Endothelial cell of umbilical vein (primary cell): ENCODE measurements at regions of chr11 and their contacts with region 1.

Region 1: GRCh38 chr11:75468534-75469340 is 35.7 kb upstream of the KLHL35 start:
- DNase-seq: peak; percentile 97
- H3K4me3 ChIP-seq: no peak overlapping the region
- H3K27ac ChIP-seq: peak overlapping the region; percentile 56
- H3K4me1 ChIP-seq: peaks cover 60% of the 10 kb centered on the region
- H3K27me3 ChIP-seq: no peaks in the 10 kb centered on the region
- CTCF ChIP-seq: no peak
- POLR2A ChIP-seq: peak; percentile 41

Region 2: DNA sequence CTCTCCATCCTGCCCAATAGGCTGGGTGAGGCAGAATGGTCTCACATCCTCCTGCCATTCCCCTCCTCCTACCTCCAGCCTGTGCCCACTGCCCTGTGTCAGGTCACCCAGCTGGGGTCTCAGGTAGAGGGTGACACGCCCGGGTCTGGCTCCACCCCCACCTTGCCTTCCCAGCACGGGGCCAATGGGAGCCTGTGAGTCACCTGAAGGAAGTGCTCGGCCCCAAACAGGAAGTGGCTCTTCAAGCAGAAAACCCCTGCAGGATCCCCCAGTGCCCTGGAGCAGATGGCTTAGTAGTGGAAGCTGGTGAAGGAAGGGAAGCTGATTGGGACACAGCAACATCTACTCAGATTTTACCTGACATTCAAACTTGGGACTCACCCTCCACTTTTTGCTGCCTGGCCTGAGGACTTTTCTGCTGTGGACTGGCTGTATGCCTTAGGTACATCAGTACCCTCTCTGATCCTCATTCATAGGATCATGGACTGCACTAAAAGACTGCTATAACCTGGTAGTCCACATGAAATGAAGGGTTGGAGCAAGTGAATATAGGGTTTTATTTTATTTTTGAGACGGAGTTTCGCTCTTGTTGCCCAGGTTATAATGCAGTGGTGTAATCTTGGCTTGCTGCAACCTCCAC is 23.6 kb after region 1 on chr11:
- CTCF ChIA-PET with region 1: interaction called, 10 read pairs
- POLR2A ChIA-PET with region 1: interaction called, 4 read pairs
- dilution Hi-C with region 1: no loop called
- intact Hi-C with region 1: loop called (anchors 2 kb)
- DNase-seq: peak; percentile 47
- H3K4me3 ChIP-seq: no peak overlapping the region
- H3K27ac ChIP-seq: no peak overlapping the region
- H3K4me1 ChIP-seq: peaks cover 37% of the 10 kb centered on the region
- H3K27me3 ChIP-seq: no peaks in the 10 kb centered on the region
- CTCF ChIP-seq: no peak
- POLR2A ChIP-seq: no peak

Region 3: DNA sequence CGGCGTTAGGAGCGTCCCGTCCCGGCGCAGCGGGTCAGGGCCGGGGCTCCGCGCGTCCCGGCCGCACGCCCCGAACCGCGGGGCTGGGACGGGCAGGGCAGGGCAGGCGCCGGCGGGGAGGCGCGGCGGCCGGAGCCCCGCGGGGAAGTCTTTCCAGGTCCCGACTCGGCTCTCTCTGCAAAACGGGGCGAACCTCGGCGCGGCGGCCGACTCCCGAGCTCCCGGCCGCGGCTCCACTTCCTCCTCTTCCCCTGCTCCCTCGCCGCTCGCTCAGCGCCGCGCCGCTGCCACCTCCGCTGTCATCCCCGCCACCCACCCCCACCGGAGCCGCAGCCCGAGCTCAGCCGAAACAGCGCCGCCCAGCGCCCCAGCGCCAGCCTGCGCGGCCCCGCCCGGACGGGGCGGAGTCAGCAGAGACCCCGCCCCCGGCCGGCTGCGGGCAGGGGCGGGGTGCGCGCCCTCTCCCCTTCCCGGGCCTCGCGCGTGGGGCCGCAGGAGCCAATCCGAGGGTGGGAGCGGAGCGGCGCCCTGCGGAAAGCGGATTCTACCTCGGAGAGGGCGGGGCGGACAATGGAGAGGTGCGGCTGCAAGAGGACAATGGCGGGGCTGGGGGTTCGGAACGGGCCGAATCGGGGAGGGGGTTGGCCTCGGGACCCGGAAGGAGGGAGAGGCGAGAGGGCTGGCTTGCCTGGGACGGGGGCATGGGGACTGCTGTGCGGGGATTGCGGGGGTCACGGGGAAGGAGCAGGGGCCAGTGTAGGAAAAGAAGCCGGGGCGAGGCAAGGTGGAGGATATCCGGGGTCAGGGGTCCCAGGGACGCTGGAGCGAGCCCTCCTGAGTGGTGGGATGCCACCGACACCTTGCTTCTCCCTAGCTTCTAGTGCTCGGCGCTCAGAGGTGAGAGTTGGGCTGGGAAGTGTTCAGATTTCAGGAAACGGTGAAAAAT is 57.1 kb after region 1 on chr11 and contains the start of gene GDPD5:
- CTCF ChIA-PET with region 1: interaction called, 40 read pairs
- POLR2A ChIA-PET with region 1: interaction called, 4 read pairs
- dilution Hi-C with region 1: no loop called
- intact Hi-C with region 1: loop called (anchors 1 kb)
- DNase-seq: peak; percentile 79
- H3K4me3 ChIP-seq: peak within 1 kb of the TSS; percentile 36 to 74 (median 68)
- H3K27ac ChIP-seq: no peak within 1 kb of the TSS
- H3K4me1 ChIP-seq: peaks cover 22% of the 10 kb centered on the region
- H3K27me3 ChIP-seq: no peaks in the 10 kb centered on the region
- CTCF ChIP-seq: peak; percentile 51 to 59
- POLR2A ChIP-seq: peak; percentile 14
- total RNA-seq, gene GDPD5: 50.1 and 79.2 TPM in 2 replicates

Region 4: GRCh38 chr11:75532200-75533048 is 63.7 kb after region 1 on chr11:
- CTCF ChIA-PET with region 1: interaction called, 12 read pairs
- POLR2A ChIA-PET with region 1: no interaction called
- dilution Hi-C with region 1: no loop called
- intact Hi-C with region 1: no loop called
- DNase-seq: peak; percentile 76
- H3K4me3 ChIP-seq: no peak overlapping the region
- H3K27ac ChIP-seq: no peak overlapping the region
- H3K4me1 ChIP-seq: peaks cover 13% of the 10 kb centered on the region
- H3K27me3 ChIP-seq: no peaks in the 10 kb centered on the region
- CTCF ChIP-seq: peak; percentile 72 to 78
- POLR2A ChIP-seq: no peak

Region 5: GRCh38 chr11:75582895-75583717 is 114.4 kb after region 1 on chr11:
- CTCF ChIA-PET with region 1: no interaction called
- POLR2A ChIA-PET with region 1: no interaction called
- dilution Hi-C with region 1: no loop called
- intact Hi-C with region 1: loop called (anchors 1 kb)
- DNase-seq: peak; percentile 84
- H3K4me3 ChIP-seq: peak overlapping the region; percentile 17 to 62 (median 38)
- H3K27ac ChIP-seq: peak overlapping the region; percentile 94
- H3K4me1 ChIP-seq: peaks cover 21% of the 10 kb centered on the region
- H3K27me3 ChIP-seq: no peaks in the 10 kb centered on the region
- CTCF ChIP-seq: peak; percentile 9 to 20
- POLR2A ChIP-seq: peak; percentile 69

Region 6: GRCh38 chr11:75826461-75827230 is 357.9 kb after region 1 on chr11:
- CTCF ChIA-PET with region 1: no interaction called
- POLR2A ChIA-PET with region 1: no interaction called
- dilution Hi-C with region 1: no loop called
- intact Hi-C with region 1: loop called (anchors 5 kb)
- DNase-seq: peak; percentile 84
- H3K4me3 ChIP-seq: peak overlapping the region in 1 of 3 experiments; percentile 1
- H3K27ac ChIP-seq: peak overlapping the region; percentile 90
- H3K4me1 ChIP-seq: peaks cover 56% of the 10 kb centered on the region
- H3K27me3 ChIP-seq: no peaks in the 10 kb centered on the region
- CTCF ChIP-seq: no peak
- POLR2A ChIP-seq: no peak